Astrocyte of the cerebellum (primary cell): ENCODE measurements at regions of chr2 and their contacts with region 1.

Region 1: DNA sequence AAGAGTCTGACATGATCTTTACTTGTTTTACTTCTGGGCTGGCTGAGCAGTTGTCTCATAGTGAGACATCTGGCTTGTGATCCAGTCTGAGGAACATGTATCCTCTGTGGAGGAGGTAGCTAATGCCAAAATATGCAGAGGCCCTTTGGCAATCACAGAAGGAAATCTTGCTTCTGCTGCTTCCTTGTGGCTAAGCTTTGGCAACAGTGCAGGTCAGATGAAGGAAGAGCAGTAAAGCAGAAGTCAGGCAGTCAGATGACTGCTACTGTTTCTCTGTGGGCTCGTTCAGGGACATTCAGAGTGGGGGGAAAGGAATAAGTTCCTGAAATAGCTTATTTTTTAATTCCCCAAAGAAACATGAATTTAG is 22.3 kb downstream of the DOK1 start:
- DNase-seq: peak; percentile 76
- H3K4me3 ChIP-seq: no peak overlapping the region
- CTCF ChIP-seq: no peak

Region 2: DNA sequence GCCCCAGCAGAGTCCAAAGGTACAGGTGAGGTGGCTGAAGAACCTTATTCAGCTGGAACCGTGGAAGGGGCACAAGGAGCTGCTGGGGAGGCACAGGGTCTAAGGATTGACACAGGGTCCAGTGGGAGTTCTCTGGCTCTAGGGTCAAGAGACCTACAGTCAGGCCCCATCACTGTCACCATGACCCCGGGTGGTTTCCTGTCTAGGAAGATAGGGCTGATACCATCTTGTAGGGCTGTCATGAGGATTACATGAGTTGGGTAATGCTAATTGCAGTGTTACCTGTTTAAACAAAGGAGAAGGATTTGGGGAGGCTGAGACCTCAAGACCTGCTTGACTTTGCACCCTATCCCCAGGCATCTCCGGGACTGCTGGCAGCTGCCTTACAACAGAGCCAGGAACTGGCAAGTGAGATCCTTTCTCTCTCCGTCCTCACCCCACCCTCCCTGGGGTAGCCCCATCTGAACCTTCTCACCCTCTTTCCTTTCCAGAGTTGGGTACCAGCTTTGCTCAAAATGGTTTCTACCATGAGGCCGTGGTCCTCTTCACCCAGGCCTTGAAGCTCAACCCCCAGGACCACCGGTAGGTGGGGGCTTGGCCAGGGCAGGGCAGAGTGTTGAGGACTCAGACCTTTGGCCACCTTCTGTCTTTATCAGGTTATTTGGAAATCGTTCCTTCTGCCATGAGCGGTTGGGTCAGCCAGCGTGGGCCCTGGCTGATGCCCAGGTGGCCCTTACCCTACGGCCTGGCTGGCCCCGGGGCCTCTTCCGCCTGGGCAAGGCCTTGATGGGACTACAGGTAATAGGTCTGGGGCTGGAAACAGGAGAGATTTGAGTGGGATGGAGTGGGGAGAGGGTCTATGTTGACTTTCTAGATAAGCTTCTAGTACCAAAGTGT is 85.0 kb before region 1 on chr2:
- in situ Hi-C with region 1: loop called (anchors 5 kb)
- DNase-seq: no peak
- H3K4me3 ChIP-seq: no peak overlapping the region
- CTCF ChIP-seq: no peak